Psoas muscle (tissue), 8 donors: ENCODE measurements at regions of chr17 and their contacts with region 1.

Region 1: GRCh38 chr17:39164675-39165143 is 1.3 kb downstream of the ARL5C start:
- DNase-seq: peak; percentile 93 to 96
- ATAC-seq: peak; percentile 84 to 91 (median 89)
- H3K4me3 ChIP-seq: peak overlapping the region; percentile 65
- H3K27ac ChIP-seq: no peak overlapping the region
- H3K4me1 ChIP-seq: peaks cover 9% of the 10 kb centered on the region
- H3K27me3 ChIP-seq: no peaks in the 10 kb centered on the region
- CTCF ChIP-seq: peak; percentile 79

Region 2: DNA sequence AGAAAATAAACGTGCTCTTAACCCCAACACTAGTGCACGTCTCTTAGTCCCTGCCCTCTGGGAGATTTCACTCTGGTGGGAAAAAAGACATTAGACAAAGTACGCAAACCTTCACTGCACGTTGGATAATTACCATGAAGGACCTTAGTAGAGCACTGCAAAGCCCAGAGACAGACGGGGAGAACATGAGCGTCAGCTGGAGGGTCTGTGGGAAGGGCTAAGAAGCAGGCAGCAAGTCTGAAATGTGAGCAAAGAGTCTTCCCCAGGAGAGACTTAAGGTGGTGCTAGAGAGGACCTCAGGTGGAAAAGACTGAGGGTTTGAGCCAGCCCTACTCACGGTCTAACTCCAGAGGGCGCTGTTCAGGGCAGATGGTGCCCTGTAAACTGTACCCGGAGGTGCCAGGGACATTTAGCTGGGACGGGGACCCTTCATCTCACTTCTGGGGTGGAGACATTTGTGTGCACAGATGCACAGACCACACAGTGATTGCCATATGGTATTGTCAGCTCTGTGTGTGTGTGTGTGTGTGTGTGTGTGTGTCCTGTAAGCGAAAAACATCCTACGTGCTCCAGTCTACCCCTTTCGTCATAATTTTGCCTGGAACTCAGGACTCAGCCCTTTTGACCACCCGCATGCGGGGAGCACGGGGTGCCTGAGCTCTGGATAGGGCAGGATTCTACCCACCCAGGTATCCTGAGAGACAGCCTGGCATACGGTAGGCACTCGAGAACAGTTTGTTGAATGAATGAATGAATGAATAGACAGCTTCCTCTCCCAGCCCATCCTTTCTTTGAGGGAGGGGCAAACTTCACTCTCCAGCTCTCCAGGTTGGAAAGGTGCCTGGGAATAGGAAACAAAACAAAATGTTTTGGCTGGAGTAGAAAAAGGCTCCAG is 71.1 kb after region 1 on chr17:
- intact Hi-C with region 1: loop called in 1 of 2 experiments (anchors 10 kb)
- DNase-seq: no peak
- ATAC-seq: peak; percentile 55 to 78 (median 64)
- H3K4me3 ChIP-seq: no peak overlapping the region
- H3K27ac ChIP-seq: no peak overlapping the region
- H3K4me1 ChIP-seq: peaks cover 15% of the 10 kb centered on the region
- H3K27me3 ChIP-seq: peaks cover 0 to 4% (median 0%) of the 10 kb centered on the region in 3 donors
- CTCF ChIP-seq: peak; percentile 47